ENCODE measurements at regions of chr11 and their contacts with region 1.

Region 1: GRCh38 chr11:33808228-33808828 is 34.0 kb upstream of the FBXO3 start:
- DNase-seq: peak; percentile 96
- ATAC-seq: peak; percentile 99
- H3K4me3 Mint-ChIP-seq: no peak overlapping the region
- H3K27ac Mint-ChIP-seq: no peak overlapping the region
- H3K4me1 Mint-ChIP-seq: peaks cover 4% of the 10 kb centered on the region; the same call in 1 of the 2 replicates
- H3K27me3 Mint-ChIP-seq: peaks cover 5% of the 10 kb centered on the region
- CTCF ChIP-seq: peak; percentile 92

Region 2: DNA sequence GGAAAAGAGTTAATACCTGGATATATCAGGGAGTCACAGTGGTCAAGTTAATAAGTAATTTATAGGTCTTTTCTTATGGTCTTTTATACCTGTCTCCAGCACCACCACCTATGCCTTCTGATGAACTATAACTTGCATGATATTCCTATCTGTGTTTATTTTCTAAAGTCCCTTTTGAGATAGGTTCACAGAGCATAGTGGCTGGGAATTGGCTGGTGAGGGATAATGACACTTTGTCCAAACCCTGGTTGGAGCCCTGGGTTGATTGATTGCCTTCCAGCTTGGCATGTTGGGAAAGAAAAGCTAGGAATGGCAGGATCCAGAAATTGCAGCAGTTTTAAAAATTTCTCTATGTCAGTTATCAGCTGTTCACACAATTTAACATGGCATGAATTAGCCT is 527.9 kb before region 1 on chr11:
- CTCF ChIA-PET with region 1: no interaction called
- POLR2A ChIA-PET with region 1: interaction called, 11 read pairs
- DNase-seq: no peak
- ATAC-seq: no peak
- H3K4me3 Mint-ChIP-seq: no peak overlapping the region
- H3K27ac Mint-ChIP-seq: no peak overlapping the region
- H3K4me1 Mint-ChIP-seq: no peaks in the 10 kb centered on the region
- H3K27me3 Mint-ChIP-seq: no peaks in the 10 kb centered on the region
- CTCF ChIP-seq: no peak

Region 3: GRCh38 chr11:33531743-33532181 is 276.6 kb before region 1 on chr11:
- CTCF ChIA-PET with region 1: no interaction called
- POLR2A ChIA-PET with region 1: no interaction called
- DNase-seq: no peak
- ATAC-seq: no peak
- H3K4me3 Mint-ChIP-seq: no peak overlapping the region
- H3K27ac Mint-ChIP-seq: no peak overlapping the region
- H3K4me1 Mint-ChIP-seq: no peaks in the 10 kb centered on the region; the same call in 1 of the 2 replicates
- H3K27me3 Mint-ChIP-seq: no peaks in the 10 kb centered on the region
- CTCF ChIP-seq: no peak

Region 4: GRCh38 chr11:33819278-33819677 is 10.9 kb after region 1 on chr11:
- CTCF ChIA-PET with region 1: interaction called, 30 read pairs
- POLR2A ChIA-PET with region 1: interaction called, 3 read pairs
- DNase-seq: no peak
- ATAC-seq: no peak
- H3K4me3 Mint-ChIP-seq: no peak overlapping the region
- H3K27ac Mint-ChIP-seq: no peak overlapping the region
- H3K4me1 Mint-ChIP-seq: peaks cover 7% of the 10 kb centered on the region
- H3K27me3 Mint-ChIP-seq: peaks cover 2% of the 10 kb centered on the region; the same call in 1 of the 2 replicates
- CTCF ChIP-seq: no peak

Region 5: DNA sequence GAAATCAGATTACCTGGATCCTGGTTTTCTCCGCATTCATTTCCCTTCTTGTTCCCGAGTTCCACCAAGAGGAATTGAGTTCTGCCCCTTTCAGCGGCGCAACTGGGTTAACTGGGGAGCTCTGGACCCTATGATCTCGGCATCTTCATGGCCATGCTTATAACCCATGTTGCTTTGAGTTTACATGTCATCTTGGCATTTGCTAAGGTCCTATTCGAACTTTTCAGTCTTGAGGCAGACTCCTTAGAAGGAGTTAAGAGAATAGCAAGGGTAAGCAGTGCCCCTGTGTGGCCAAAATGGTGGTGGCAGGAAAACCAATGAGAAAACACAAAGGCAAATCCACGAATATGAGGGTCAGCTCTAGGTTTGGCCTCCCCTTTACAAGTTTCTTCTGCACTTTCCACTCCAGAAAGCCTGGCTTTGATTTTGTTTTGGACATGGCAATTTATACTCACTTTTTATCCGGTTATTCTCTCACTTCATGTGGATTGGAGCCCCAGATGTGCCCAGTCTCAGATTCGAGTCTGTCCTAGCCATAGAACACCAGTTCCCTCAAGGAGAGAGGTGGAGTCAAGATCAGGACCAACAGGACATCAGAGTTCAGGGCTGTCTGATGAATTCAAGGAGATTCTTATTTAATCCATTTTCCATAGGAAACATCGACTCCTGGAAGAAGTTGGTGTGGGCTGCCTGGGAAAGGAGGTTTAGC is 21.3 kb after region 1 on chr11:
- CTCF ChIA-PET with region 1: interaction called, 131 read pairs
- POLR2A ChIA-PET with region 1: no interaction called
- DNase-seq: peak; percentile 65
- ATAC-seq: peak; percentile 88
- H3K4me3 Mint-ChIP-seq: peak overlapping the region; percentile 89
- H3K27ac Mint-ChIP-seq: no peak overlapping the region
- H3K4me1 Mint-ChIP-seq: no peaks in the 10 kb centered on the region; the same call in 1 of the 2 replicates
- H3K27me3 Mint-ChIP-seq: peaks cover 39% of the 10 kb centered on the region
- CTCF ChIP-seq: peak; percentile 32

Region 6: GRCh38 chr11:33835143-33835878 is 27.0 kb after region 1 on chr11:
- CTCF ChIA-PET with region 1: interaction called, 131 read pairs
- POLR2A ChIA-PET with region 1: no interaction called
- DNase-seq: no peak
- ATAC-seq: no peak
- H3K4me3 Mint-ChIP-seq: no peak overlapping the region
- H3K27ac Mint-ChIP-seq: no peak overlapping the region
- H3K4me1 Mint-ChIP-seq: no peaks in the 10 kb centered on the region
- H3K27me3 Mint-ChIP-seq: peaks cover 3% of the 10 kb centered on the region; the same call in 1 of the 2 replicates
- CTCF ChIP-seq: no peak

Region 7: DNA sequence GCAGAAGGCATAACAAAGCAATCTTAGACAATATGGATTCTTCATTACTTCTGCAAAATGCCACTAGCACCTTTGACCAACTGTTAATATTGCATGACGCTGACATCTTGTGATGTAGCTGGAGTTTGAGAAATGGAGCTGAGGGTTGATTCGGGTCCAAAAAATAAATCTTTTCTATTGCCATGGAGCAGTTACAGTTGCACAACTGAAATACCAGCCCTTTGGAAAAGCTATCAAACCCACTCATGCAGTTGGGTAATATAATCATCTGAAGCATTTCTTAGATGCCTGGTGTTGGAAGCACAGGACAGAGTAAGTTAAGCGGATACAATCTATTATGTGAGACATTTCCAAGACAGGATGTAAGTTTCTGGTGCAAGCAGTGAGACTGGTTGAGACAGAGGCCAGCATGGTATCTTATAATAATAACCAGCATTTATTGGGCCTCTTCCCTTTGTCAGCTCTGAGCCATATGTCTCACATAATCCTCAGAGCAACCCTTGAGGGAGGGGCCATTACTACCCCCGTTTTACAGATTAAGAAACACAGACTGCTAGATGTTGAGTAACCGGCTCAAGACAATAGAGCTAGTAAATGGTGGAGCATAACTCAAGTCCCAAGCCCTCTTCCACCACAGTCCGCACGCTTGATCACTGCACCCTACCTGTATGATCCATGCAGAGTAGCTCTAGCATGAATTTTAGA is 168.3 kb after region 1 on chr11:
- CTCF ChIA-PET with region 1: interaction called, 10 read pairs
- POLR2A ChIA-PET with region 1: interaction called, 3 read pairs
- DNase-seq: no peak
- ATAC-seq: no peak
- H3K4me3 Mint-ChIP-seq: no peak overlapping the region
- H3K27ac Mint-ChIP-seq: no peak overlapping the region
- H3K4me1 Mint-ChIP-seq: no peaks in the 10 kb centered on the region
- H3K27me3 Mint-ChIP-seq: no peaks in the 10 kb centered on the region
- CTCF ChIP-seq: no peak

Region 8: DNA sequence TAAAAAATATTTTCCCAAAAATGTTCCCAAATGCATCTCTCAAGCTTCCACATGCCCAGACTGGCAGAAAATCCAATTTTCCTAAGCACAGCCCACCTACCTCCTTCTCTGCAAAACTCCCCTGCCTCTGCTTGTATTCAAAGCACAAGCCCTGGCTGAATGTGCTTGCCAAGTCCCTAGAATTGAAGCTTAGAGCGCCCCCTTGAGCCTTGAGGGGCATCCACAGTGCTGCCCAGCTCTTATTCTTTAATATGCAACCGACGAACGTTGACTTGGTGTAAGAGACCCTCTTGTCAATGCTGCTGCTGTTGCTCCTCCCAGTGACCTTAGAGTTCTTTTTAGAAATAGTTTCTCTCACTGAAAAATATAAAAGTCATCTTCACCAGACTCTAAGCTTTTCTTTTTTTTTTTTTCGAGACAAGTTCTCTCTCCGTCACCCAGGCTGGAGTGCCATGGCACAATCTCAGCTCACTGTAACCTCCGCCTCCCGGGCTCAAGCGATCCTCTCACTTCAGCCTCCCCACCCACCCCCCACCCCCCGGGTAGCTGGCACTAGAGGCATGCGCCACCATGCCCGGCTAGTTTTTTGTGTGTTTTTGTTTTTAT is 179.8 kb after region 1 on chr11:
- CTCF ChIA-PET with region 1: interaction called, 33 read pairs
- POLR2A ChIA-PET with region 1: no interaction called
- DNase-seq: peak; percentile 82
- ATAC-seq: peak; percentile 99
- H3K4me3 Mint-ChIP-seq: no peak overlapping the region
- H3K27ac Mint-ChIP-seq: no peak overlapping the region
- H3K4me1 Mint-ChIP-seq: no peaks in the 10 kb centered on the region
- H3K27me3 Mint-ChIP-seq: no peaks in the 10 kb centered on the region
- CTCF ChIP-seq: peak; percentile 80